ENCODE measurements at regions of chr12 and their contacts with region 1.

Region 1: DNA sequence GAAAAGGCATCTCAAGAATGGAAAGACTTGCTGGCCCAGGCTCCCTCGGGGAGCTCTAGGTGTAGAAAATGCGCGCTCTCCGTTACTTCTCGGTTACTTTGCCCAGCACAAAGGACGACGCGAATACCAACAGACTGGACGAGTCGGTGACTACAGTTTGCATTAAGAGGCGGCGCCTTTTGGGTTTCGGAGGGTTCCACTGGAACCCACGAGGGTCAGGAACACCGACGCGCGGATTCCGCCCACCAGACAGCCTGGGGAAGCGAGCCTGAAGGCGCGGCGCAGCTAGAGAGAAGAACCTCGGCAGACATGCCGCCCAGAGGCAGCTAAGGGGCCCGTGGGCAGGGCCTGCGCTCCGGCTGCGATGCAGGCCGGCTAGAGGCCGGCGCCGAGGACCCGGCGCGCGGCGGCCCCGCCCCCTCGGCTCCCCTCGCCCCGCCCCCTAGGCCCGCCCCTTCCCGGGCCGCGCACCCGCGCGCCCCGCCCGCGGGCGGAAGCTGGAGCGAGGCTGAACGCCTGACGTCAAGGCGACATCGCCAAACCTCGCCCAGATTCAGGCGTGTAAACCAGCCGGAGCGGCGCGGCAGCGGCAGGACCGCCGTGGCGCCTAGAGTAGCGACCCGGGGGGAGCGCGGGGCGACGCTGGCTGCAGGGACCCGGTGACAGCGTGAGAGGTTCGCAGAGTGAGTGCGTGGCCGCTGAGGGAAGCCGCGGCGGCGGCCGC is at the start of gene RAP1B:
- DNase-seq: peak; percentile 37 to 91
- H3K4me3 ChIP-seq: peak within 1 kb of the TSS; percentile 84 to 98
- H3K27ac ChIP-seq: peak within 1 kb of the TSS; percentile 99 to 100
- H3K4me1 ChIP-seq: peaks cover 12 to 22% of the 10 kb centered on the region in 2 donors
- H3K27me3 ChIP-seq: no peaks in the 10 kb centered on the region
- CTCF ChIP-seq: no peak
- total RNA-seq, gene RAP1B: 140 TPM

Region 2: DNA sequence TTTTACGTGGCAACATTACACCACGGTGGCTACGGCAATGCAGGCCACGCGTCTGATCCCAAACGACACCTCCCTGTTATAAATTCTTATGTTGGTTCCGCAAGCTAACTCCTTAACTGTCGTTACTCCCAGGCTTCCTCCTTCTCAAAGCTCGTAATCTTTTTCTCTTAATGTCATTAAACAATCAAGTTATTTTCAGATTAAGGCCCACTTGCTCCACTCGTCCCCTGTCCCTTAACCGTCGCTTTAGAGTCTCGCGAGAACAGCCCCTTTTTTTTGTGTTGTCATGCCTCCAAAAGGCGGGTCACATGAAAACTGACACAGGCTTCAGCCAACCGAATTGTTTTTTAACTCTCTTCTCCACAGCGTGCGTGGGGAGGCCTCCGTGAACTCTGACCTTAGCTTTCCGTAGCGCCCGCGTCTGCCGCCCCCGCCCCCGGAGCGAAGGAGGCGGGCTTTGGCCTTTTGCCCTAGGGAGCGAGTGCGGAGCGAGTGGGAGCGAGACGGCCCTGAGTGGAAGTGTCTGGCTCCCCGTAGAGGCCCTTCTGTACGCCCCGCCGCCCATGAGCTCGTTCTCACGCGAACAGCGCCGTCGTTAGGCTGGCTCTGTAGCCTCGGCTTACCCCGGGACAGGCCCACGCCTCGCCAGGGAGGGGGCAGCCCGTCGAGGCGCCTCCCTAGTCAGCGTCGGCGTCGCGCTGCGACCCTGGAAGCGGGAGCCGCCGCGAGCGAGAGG is 1341.5 kb before region 1 on chr12 and contains the start of gene CAND1:
- intact Hi-C with region 1: loop called (anchors 10 kb)
- DNase-seq: peak; percentile 90 to 99
- H3K4me3 ChIP-seq: peak within 1 kb of the TSS; percentile 78 to 96
- H3K27ac ChIP-seq: peak within 1 kb of the TSS; percentile 93 to 99
- H3K4me1 ChIP-seq: peaks cover 0 to 30% of the 10 kb centered on the region in 2 donors
- H3K27me3 ChIP-seq: no peaks in the 10 kb centered on the region
- CTCF ChIP-seq: no peak
- total RNA-seq, gene CAND1: 31.6 TPM

Region 3: DNA sequence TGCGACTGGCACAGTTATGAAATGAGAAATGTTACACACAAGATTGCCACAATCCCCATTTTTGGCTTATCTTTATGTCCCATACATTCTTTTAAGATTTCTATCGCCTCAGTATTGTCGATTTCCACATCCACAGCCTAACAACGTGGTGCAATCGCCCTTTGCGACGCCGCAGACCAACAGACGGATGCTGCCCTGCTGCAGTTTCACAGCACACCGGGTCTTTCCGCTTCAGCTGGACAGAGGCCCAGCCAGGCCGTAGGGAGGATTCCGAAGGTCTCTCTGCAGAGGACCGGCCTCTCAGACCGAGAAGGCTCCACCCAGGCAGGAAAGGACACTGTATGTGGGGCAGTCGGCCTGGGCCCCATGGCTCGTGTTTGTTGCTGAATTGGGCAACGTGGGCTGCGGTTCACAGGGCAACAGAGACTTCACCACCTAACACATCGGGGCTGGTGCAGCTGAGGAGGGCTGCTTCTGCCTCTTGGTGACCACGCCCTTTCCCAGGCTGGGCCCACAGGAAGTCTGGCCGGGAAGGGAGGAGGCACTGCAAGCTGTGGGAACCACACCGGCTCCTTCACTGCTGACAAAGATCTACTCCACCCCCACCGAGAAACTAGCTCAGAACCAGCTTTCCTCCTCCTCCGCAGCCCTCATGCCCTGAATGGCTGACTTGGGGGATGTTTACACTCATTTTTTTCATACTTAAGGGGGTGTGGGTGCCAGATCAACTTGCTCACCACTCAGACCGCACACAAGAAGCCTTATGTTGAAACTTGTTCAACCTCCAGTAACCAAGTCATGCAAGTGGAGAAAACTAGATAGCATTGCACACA is 245.4 kb before region 1 on chr12:
- intact Hi-C with region 1: loop called (anchors 2 kb)
- DNase-seq: peak; percentile 85 to 97
- H3K4me3 ChIP-seq: peak overlapping the region; percentile 38 to 58
- H3K27ac ChIP-seq: peak overlapping the region; percentile 74 to 86
- H3K4me1 ChIP-seq: peaks cover 0 to 4% of the 10 kb centered on the region in 2 donors
- H3K27me3 ChIP-seq: no peaks in the 10 kb centered on the region
- CTCF ChIP-seq: no peak

Region 4: DNA sequence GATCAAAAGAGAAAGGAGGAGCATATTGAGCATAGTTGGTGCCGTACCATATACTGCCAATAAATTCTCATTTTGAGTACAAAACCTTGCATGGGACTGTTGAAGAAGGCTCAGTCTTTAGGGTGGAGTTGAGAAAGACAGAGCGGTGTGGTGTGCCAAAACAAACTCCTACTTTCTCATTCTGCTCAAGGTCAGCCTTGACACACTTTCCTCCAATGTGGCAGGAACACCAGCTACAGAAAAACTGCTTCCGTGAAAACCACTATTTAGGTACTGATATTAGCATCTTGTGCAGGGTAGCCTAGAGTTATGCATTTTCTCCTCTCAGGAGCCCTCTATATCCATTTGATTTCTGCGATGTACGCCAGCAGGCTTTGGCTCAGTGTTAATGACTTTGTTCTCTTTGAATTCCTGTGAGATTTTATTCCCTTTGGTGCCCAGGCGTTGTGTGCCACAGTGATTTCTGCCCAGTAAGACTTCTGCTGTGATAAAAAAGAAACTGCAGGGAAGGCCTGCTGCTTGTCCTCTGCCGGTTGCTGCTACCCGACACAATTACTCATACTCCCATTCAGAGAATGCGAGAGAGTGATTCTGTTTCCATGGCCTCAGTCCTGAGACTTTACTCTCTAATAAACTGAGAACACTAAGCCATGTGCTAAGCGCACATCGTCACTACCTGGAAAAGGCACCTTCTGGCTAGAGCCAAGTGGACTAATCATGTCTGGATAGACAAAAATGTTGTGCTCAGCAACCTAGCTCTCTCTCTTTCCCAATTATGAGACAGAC is 190.1 kb before region 1 on chr12:
- intact Hi-C with region 1: loop called (anchors 5 kb)
- DNase-seq: peak in 1 of 2 donors; percentile 70
- H3K4me3 ChIP-seq: peak overlapping the region; percentile 27 to 40
- H3K27ac ChIP-seq: peak overlapping the region; percentile 54 to 67
- H3K4me1 ChIP-seq: peaks cover 0 to 11% of the 10 kb centered on the region in 2 donors
- H3K27me3 ChIP-seq: no peaks in the 10 kb centered on the region
- CTCF ChIP-seq: no peak

Region 5: DNA sequence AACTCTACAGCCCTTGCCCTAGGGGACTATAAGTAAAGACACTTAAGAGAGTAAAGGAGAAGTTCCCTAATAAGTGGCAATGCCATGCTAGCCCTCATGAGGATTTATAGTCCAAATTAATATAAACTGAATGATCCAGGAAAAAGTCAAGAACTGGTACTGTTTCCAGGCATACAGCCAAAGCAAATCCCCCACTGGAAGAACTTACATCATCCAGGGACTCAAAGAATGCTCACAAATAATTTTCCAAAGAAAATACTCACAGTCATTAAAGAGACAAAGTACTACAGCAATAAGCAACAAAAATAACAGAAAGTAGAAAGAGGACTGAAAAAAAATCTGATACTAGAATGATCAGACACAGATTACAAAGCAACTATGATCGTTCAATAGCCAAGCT is 79.6 kb before region 1 on chr12:
- intact Hi-C with region 1: loop called (anchors 2 kb)
- DNase-seq: peak in 1 of 2 donors; percentile 74
- H3K4me3 ChIP-seq: peak overlapping the region in 1 of 2 donors; percentile 2
- H3K27ac ChIP-seq: peak overlapping the region; percentile 22 to 68
- H3K4me1 ChIP-seq: peaks cover 6 to 28% of the 10 kb centered on the region in 2 donors
- H3K27me3 ChIP-seq: no peaks in the 10 kb centered on the region
- CTCF ChIP-seq: no peak

Region 6: GRCh38 chr12:68807576-68808387 is 197.2 kb after region 1 on chr12 and contains the start of gene MDM2:
- intact Hi-C with region 1: loop called (anchors 1 kb)
- DNase-seq: peak; percentile 85 to 97
- H3K4me3 ChIP-seq: peak within 1 kb of the TSS; percentile 81 to 93
- H3K27ac ChIP-seq: peak within 1 kb of the TSS; percentile 98 to 99
- H3K4me1 ChIP-seq: peaks cover 0 to 14% of the 10 kb centered on the region in 2 donors
- H3K27me3 ChIP-seq: no peaks in the 10 kb centered on the region
- CTCF ChIP-seq: peak; percentile 80 to 85 (median 82)
- total RNA-seq, gene MDM2: 24.2 TPM

Measured in ascending aorta (tissue), 2 donors.